HepG2 (cell line): ENCODE measurements at regions of chr3 and their contacts with region 1.

Region 1: DNA sequence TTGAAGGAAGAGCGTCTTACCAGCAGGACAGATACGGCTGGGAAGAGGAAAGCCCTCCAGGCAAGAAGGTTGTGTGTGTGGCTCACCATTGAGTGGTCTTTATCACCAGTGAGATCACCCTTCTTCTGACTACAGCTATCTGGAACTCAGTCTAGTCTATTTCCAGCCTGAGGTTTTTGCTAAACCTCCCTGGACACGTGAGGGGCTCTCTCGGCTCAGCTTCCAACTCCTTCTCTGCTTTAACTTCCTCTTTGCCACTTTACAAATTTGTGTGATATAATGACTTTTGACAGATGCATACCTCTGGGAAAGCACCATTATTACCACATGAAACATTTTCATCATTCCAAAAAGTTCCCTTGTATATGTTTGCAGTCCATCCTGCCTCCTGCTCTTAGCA is 15.3 kb upstream of the ROPN1 start:
- DNase-seq: no peak
- ATAC-seq: no peak
- H3K4me3 ChIP-seq: no peak overlapping the region
- H3K27ac ChIP-seq: no peak overlapping the region
- H3K4me1 ChIP-seq: no peaks in the 10 kb centered on the region
- H3K27me3 ChIP-seq: peaks cover 1 to 3% of the 10 kb centered on the region in 2 experiments; a peak in 1 of 5 replicates
- CTCF ChIP-seq: no peak
- EP300 ChIP-seq: no peak
- POLR2A ChIP-seq: no peak
- RAD21 ChIP-seq: no peak

Region 2: DNA sequence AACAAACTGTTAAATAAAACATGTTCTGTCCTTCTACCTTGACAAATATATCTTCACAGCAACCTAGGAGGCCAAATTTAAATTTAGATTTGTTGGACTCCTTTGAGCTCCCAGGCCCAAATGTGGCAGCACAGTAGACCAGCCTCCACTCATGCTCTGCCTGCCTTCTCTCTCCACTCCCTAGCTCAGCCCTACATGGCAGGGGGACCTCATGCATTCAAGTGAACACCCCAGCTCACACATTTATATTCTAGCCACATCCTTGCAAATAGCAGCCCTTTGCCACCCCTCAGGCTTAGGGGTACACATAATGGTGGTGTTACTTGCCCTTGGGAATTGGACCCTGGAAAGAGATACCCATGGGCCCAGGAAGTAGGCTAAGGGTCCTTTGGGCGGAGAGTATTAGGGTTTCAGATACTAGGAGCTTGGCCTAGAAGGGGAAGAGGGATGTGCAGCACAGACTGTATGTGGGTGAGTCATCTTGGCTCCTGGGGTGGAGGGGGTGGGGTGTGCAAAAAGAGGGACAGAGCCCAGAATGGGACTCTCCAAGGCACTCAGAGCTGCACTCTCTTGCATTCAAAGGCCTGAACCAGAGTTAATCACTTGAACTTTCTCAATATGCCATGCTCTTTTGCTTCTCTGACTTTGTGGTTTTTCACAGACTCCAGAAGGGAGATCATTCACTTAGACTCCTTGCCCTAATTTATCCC is 253.2 kb after region 1 on chr3:
- CTCF ChIA-PET with region 1: no interaction called
- POLR2A ChIA-PET with region 1: no interaction called
- in situ Hi-C with region 1: loop called (anchors 25 kb)
- intact Hi-C with region 1: no loop called
- DNase-seq: no peak
- ATAC-seq: no peak
- H3K4me3 ChIP-seq: no peak overlapping the region
- H3K27ac ChIP-seq: no peak overlapping the region
- H3K4me1 ChIP-seq: peaks cover 8% of the 10 kb centered on the region
- H3K27me3 ChIP-seq: peaks cover 0 to 4% of the 10 kb centered on the region in 2 experiments; a peak in 1 of 5 replicates
- CTCF ChIP-seq: no peak
- EP300 ChIP-seq: no peak
- POLR2A ChIP-seq: no peak
- RAD21 ChIP-seq: no peak